ENCODE measurements at regions of chr1 and their contacts with region 1.

Region 1: GRCh38 chr1:234722904-234723720 is 113.1 kb upstream of the IRF2BP2 start:
- DNase-seq: peak; percentile 93
- H3K4me3 ChIP-seq: peak overlapping the region in 2 of 4 donors; percentile 5 to 9
- H3K27ac ChIP-seq: peak overlapping the region; percentile 94 to 97 (median 96)
- H3K4me1 ChIP-seq: peaks cover 0 to 95% (median 89%) of the 10 kb centered on the region in 4 donors
- H3K27me3 ChIP-seq: no peaks in the 10 kb centered on the region
- CTCF ChIP-seq: no peak
- EP300 ChIP-seq: no peak
- POLR2A ChIP-seq: no peak

Region 2: DNA sequence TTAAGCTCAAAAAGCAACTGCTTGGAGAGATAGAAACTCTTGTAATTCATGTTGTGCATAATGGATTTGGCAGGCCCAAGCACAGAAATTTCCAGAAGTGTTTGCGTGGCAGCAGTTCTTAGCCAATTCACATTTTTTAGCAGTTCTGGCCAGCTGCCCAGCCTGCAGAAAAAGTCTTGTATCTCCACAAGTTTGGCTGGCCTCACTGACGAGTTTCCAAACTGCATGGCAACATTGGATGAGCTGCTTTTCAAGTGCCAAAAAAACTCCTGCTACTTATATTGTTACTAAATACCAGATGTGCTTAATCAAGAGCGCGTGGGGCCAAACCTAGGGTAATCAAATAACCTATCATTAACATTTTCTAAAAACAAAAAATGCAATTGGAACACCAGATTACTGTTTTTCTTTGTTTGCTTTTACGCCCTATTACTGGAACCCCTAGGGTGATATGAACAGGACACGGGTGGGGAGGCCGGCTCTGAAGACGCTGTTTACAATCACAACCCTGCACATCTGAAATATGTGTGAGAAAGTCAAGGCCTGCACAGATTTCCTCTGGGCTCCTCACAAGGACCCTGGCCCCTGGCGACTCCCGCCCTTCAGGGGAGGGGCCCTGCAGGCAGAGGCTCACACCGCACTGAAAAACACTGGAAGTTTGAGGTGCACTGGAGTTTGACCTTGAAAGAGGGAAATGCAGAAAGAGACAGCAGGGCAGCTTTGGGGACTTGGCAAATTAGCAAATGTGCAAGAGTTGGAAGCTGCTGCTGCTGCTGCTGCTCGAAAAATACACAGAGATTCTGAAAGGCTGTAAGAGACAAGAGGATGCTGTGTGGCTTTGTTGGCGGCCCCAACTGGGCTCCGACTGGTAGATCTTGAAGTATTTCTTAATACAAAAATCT is 188.9 kb before region 1 on chr1:
- intact Hi-C with region 1: loop called (anchors 2 kb)
- DNase-seq: peak; percentile 99
- H3K4me3 ChIP-seq: no peak overlapping the region
- H3K27ac ChIP-seq: peak overlapping the region; percentile 88 to 99 (median 96)
- H3K4me1 ChIP-seq: peaks cover 0 to 98% (median 98%) of the 10 kb centered on the region in 4 donors
- H3K27me3 ChIP-seq: no peaks in the 10 kb centered on the region
- CTCF ChIP-seq: no peak
- EP300 ChIP-seq: peak; percentile 36 to 81 (median 60)
- POLR2A ChIP-seq: no peak

Region 3: DNA sequence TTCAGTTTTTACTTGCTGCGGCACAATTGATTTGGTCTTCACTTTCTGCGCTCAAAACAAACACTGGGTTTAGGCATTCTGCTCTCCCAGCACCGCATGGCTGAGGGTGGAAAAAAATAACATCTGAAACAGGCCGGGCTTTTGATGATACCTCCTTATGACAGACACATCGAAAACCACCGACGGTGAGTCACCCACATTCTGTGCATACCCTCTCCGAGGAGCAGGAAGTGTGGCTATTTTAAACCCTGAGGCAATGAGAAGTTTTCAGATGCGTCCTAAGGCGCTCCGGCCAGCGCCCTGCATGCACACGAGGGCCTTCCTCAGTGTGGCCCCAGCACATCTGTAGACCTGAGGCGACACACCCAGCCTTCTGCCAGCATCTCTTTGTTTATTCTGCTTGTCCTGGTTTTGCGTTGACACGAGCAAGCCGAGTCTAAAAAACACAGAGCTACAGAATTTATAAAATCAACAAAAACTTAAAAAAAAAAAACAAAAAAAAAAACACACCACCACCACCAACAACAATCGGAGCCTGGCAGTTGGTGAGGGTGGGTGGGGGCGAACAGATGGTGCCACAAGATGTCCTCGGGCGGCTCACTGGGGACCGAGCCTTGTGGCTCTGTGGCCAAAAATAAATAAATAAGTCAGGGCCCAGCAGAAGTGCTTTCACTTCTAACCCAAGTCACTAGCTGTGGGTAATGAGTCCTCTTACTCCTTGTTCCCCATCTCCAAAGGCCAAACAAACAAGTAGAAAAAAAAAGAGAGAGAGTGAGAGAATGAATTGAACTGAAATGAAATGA is 49.4 kb after region 1 on chr1:
- intact Hi-C with region 1: loop called (anchors 5 kb)
- DNase-seq: peak; percentile 86
- H3K4me3 ChIP-seq: no peak overlapping the region
- H3K27ac ChIP-seq: peak overlapping the region; percentile 57 to 78 (median 68)
- H3K4me1 ChIP-seq: peaks cover 0 to 18% (median 16%) of the 10 kb centered on the region in 4 donors
- H3K27me3 ChIP-seq: no peaks in the 10 kb centered on the region
- CTCF ChIP-seq: no peak
- EP300 ChIP-seq: peak in 2 of 4 donors; percentile 41 to 59
- POLR2A ChIP-seq: no peak

Region 4: DNA sequence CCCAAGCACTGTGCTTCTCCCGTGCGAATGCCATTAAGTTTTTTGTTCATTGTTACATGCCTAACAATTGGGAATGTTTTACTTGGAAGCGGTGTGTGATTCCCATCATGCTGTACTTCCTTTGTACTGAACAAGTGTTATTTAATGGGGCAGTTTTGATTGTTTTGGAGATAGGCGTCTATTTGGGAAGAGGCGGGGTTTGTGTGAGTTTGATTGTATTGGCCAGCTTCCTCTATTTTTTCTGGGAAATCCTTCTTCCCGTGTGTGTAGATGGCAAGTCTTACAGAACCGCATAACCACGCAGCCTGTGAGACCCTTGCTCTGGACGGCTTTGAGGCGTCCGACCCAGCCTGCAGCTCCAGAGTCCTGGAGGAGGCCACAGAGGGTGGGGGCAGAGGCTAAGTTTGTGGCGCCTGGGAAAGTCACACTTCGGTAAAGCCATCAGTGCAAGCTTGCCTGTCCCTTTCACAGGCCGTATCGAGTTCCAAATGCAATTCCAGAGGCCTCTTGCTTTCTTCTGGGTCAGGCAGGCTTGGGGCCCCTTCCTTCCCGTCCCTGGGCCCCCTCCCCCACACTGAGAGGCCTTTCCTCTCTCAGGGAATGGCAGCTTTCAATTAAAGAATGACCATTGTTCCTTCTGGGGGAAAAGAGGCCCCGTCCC is 195.2 kb after region 1 on chr1:
- intact Hi-C with region 1: loop called (anchors 2 kb)
- DNase-seq: peak; percentile 63
- H3K4me3 ChIP-seq: no peak overlapping the region
- H3K27ac ChIP-seq: peak overlapping the region; percentile 73 to 84 (median 76)
- H3K4me1 ChIP-seq: peaks cover 0 to 52% (median 36%) of the 10 kb centered on the region in 4 donors
- H3K27me3 ChIP-seq: no peaks in the 10 kb centered on the region
- CTCF ChIP-seq: no peak
- EP300 ChIP-seq: peak in 2 of 4 donors; percentile 6 to 73
- POLR2A ChIP-seq: no peak

Region 5: DNA sequence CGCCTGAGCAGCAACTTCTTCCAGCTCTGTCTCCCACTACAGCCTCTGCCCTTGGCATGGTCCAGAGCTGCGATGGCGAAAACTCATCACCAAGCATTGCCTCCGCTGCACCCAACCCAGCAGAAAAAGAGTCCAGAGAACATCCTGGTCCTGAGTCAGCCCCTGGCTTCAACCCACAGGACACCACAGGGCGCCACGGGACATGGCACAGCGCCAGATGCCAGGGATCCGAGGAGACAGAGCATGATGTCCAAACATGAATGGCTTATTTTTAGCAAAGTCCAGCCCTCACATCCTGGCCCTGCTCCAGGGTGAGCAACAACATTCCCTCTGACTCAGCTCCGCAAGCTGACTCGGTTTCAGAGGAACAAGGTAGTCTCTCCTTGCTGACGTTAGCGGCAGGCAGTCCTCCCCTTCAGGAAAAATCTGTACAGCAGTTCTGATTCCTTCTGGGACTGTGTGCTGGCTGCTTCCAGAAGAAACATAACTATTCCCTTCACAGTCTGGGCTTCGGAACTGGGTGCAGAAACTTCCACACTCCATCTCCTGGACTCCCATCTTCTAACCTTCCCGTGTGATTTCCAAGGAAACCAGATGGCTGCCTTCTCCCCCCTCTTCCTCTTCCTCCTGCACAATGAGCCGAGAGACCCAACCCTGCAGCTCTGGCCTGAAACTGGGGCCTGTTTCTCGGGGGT is 274.2 kb after region 1 on chr1:
- intact Hi-C with region 1: loop called (anchors 1 kb)
- DNase-seq: peak; percentile 100
- H3K4me3 ChIP-seq: peak overlapping the region in 1 of 4 donors; percentile 3
- H3K27ac ChIP-seq: peak overlapping the region; percentile 89 to 95 (median 90)
- H3K4me1 ChIP-seq: peaks cover 0 to 45% (median 42%) of the 10 kb centered on the region in 4 donors
- H3K27me3 ChIP-seq: no peaks in the 10 kb centered on the region
- CTCF ChIP-seq: no peak
- EP300 ChIP-seq: peak; percentile 98 to 100 (median 99)
- POLR2A ChIP-seq: peak; percentile 29 to 42

Region 6: GRCh38 chr1:235075188-235075926 is 352.2 kb after region 1 on chr1:
- intact Hi-C with region 1: loop called (anchors 2 kb)
- DNase-seq: peak; percentile 81
- H3K4me3 ChIP-seq: no peak overlapping the region
- H3K27ac ChIP-seq: peak overlapping the region; percentile 69 to 89 (median 82)
- H3K4me1 ChIP-seq: peaks cover 0 to 39% (median 35%) of the 10 kb centered on the region in 4 donors
- H3K27me3 ChIP-seq: no peaks in the 10 kb centered on the region
- CTCF ChIP-seq: no peak
- EP300 ChIP-seq: peak in 2 of 4 donors; percentile 39 to 40
- POLR2A ChIP-seq: no peak

Measured in sigmoid colon (tissue), 7 donors.